Transverse colon (tissue), 4 donors: ENCODE measurements at regions of chr4 and their contacts with region 1.

Region 1: GRCh38 chr4:153731239-153731638 is 28.6 kb downstream of the RNF175 start:
- DNase-seq: no peak
- H3K4me3 ChIP-seq: no peak overlapping the region
- H3K27ac ChIP-seq: no peak overlapping the region
- H3K4me1 ChIP-seq: no peaks in the 10 kb centered on the region
- H3K27me3 ChIP-seq: no peaks in the 10 kb centered on the region
- CTCF ChIP-seq: no peak
- EP300 ChIP-seq: no peak
- POLR2A ChIP-seq: no peak

Region 2: GRCh38 chr4:154743683-154744340 is 1012.6 kb after region 1 on chr4 and contains the start of gene LRAT:
- in situ Hi-C with region 1: no loop called
- intact Hi-C with region 1: loop called (anchors 5 kb)
- DNase-seq: peak; percentile 72
- H3K4me3 ChIP-seq: peak within 1 kb of the TSS; percentile 37 to 59 (median 46)
- H3K27ac ChIP-seq: no peak within 1 kb of the TSS
- H3K4me1 ChIP-seq: peaks cover 0 to 32% (median 9%) of the 10 kb centered on the region in 4 donors
- H3K27me3 ChIP-seq: peaks cover 75% of the 10 kb centered on the region
- CTCF ChIP-seq: peak; percentile 16 to 57 (median 21)
- EP300 ChIP-seq: no peak
- POLR2A ChIP-seq: no peak
- total RNA-seq, gene LRAT: 0.32 to 0.80 (median 0.41) TPM in 3 of 4 donors, not detected in the other